Upper lobe of right lung (tissue), 1 donor: ENCODE measurements at regions of chr6 and their contacts with region 1.

Region 1: DNA sequence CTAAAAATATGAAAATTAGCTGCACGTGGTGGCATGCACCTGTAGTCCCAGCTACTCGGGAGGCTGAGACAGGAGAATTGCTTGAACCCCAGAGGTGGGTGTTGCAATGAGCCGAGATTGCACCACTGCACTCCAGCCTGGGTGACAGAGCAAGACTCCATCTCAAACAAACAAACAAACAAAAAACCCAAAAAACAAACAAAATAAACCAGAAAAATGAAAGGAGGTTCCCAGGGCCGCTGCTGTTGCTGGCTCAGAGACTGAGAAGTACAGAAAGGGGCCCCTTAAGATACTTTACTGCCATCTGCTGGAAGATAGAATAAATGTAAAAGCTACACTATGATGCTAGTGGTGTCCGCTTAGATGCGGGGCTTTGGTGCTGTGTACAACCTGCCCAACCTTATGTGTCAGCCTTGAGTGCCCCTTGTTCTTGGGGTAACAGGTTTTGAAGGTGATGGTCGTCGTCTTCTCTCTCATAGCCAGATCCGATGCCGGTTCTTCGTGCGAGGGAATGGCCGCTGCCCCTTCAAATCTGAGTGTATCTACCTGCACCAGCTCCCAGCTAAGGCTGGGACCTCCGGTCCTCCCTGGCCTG is 2.8 kb upstream of the FANCE start:
- DNase-seq: no peak
- ATAC-seq: peak; percentile 66
- H3K4me3 ChIP-seq: no peak overlapping the region
- H3K27ac ChIP-seq: no peak overlapping the region
- H3K4me1 ChIP-seq: peaks cover 19% of the 10 kb centered on the region
- H3K27me3 ChIP-seq: no peaks in the 10 kb centered on the region
- CTCF ChIP-seq: peak; percentile 74

Region 2: DNA sequence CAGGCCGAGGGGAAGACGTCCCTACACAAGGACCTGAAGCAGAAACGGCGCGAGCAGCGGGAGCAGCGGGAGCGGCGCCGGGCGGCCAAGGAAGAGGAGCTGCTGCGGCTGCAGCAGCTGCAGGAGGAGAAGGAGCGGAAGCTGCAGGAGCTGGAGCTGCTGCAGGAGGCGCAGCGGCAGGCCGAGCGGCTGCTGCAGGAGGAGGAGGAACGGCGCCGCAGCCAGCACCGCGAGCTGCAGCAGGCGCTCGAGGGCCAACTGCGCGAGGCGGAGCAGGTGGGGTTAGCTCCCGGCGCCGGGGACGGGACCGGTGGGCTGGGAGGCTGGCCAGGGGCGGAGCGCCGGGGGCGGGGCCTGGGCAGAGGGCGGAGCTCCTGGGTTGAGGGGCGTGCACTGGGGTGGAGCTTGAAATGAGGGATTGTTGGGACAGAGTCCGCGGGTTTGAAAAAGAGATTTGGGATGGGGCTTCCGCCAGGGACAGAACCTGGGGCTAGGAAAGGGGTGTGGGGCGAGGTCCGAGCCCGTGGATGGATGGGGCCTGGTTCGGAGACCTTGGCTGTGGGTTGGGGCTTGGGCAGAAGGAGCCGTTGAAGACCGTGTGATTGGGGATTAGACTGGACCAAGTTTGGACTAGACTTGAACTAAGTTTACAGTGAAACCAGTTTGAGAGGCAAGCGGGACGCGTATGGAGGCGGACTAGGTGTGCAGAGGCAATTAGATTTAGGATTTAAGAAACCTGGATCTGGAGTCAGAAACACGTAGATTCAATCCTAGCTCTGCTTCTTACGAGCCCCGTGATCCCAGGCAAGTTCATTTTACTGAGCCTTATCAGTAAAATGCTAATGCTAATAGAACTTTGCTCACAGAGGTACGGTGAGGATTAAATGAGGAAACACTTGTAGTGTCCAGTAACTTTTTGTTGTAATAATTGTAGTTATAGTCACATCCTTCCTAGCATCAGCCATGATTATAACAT is 130.9 kb before region 1 on chr6:
- intact Hi-C with region 1: no loop called
- DNase-seq: peak; percentile 87
- ATAC-seq: peak; percentile 99
- H3K4me3 ChIP-seq: peak overlapping the region; percentile 46
- H3K27ac ChIP-seq: no peak overlapping the region
- H3K4me1 ChIP-seq: peaks cover 9% of the 10 kb centered on the region
- H3K27me3 ChIP-seq: no peaks in the 10 kb centered on the region
- CTCF ChIP-seq: no peak

Region 3: GRCh38 chr6:35342258-35343091 is 106.9 kb before region 1 on chr6 and contains the start of gene PPARD:
- intact Hi-C with region 1: loop called (anchors 5 kb)
- DNase-seq: peak; percentile 99
- ATAC-seq: peak; percentile 99
- H3K4me3 ChIP-seq: peak within 1 kb of the TSS; percentile 88
- H3K27ac ChIP-seq: peak within 1 kb of the TSS; percentile 87
- H3K4me1 ChIP-seq: peaks cover 18% of the 10 kb centered on the region
- H3K27me3 ChIP-seq: no peaks in the 10 kb centered on the region
- CTCF ChIP-seq: peak; percentile 94
- total RNA-seq, gene PPARD: 31.6 TPM